Esophagus muscularis mucosa (tissue), 4 donors: ENCODE measurements at regions of chr7 and their contacts with region 1.

Region 1: DNA sequence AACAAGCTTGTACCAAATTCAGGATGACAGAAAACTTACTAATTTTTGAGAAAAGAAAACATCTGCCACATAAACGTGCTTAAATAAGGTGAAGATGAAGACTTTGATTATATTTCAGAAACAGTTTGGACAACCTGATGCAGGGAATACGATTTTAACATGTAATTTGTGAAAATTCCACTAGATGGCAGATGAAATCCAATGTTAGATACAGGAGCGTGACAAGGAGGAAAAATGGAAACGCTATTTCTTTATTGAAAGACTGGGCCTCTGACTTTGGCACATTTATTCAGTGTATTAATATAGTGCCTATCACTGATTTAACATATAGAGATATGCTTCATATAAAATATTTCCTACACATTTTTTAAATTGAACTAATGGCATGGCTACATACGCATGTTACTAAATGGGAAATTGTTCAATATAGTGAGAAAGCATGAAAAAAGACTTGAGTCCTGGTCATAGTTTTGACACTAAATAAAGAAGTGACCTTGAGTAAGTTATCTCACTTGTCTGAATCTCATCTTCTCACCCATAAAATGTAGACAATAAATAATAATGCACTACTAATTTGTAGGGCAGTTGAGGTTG is 60.7 kb downstream of the CD36 start:
- DNase-seq: no peak
- H3K4me3 ChIP-seq: no peak overlapping the region
- H3K27ac ChIP-seq: peak overlapping the region in 3 of 4 donors; percentile 26 to 52 (median 51)
- H3K4me1 ChIP-seq: peaks cover 0 to 18% (median 16%) of the 10 kb centered on the region in 4 donors
- H3K27me3 ChIP-seq: no peaks in the 10 kb centered on the region
- CTCF ChIP-seq: peak; percentile 66 to 76 (median 68)
- EP300 ChIP-seq: no peak
- POLR2A ChIP-seq: no peak

Region 2: GRCh38 chr7:81256991-81257390 is 557.8 kb after region 1 on chr7:
- intact Hi-C with region 1: loop called (anchors 10 kb)
- DNase-seq: no peak
- H3K4me3 ChIP-seq: no peak overlapping the region
- H3K27ac ChIP-seq: no peak overlapping the region
- H3K4me1 ChIP-seq: no peaks in the 10 kb centered on the region
- H3K27me3 ChIP-seq: no peaks in the 10 kb centered on the region
- CTCF ChIP-seq: peak; percentile 26 to 46 (median 27)
- EP300 ChIP-seq: no peak
- POLR2A ChIP-seq: no peak

Region 3: GRCh38 chr7:81447351-81447952 is 748.3 kb after region 1 on chr7:
- intact Hi-C with region 1: loop called (anchors 5 kb)
- DNase-seq: no peak
- H3K4me3 ChIP-seq: no peak overlapping the region
- H3K27ac ChIP-seq: no peak overlapping the region
- H3K4me1 ChIP-seq: no peaks in the 10 kb centered on the region
- H3K27me3 ChIP-seq: no peaks in the 10 kb centered on the region
- CTCF ChIP-seq: peak; percentile 30 to 37 (median 36)
- EP300 ChIP-seq: no peak
- POLR2A ChIP-seq: no peak

Region 4: DNA sequence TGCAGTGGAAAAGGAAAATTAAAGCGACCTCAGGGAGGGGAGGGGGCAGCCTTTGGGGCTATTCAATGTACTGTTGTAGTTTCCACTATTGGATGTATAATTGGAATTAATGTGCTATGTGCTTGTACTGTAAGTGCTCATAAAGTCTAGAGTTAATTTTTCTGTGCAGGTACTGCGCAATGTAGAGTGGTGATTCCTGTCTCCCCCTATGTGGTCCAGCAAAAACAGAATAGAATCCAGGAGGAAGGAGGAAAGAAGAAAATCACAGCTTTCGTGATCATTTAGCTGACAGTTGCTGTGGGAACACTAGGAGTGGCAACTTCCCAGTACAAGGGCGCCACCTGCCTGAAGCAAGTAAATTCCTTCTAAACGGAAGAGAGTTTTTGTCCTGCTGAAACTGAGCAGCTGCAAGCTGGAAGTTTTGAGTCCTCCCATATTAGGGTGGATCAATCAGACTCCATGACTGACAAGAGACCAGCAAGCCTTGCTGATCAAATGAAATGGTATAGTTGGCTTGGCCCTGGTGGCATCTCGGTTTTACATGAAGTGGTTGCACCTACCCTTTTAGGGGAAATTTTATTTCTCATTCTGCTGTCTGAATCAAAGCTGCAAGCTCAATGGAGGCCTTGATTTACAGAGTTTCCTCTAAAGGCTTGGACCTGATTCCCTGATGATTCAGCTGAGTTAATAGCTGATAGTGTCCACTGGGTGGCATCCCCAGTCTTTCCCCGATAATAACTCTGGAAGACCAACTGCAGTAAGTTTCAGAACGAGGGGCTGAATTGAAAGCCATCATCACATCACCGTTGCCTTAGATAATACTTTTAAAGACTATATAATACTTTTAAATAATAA is 771.0 kb after region 1 on chr7:
- intact Hi-C with region 1: loop called (anchors 2 kb)
- DNase-seq: no peak
- H3K4me3 ChIP-seq: no peak overlapping the region
- H3K27ac ChIP-seq: no peak overlapping the region
- H3K4me1 ChIP-seq: peaks cover 0 to 9% (median 3%) of the 10 kb centered on the region in 4 donors
- H3K27me3 ChIP-seq: no peaks in the 10 kb centered on the region
- CTCF ChIP-seq: peak; percentile 61 to 69 (median 63)
- EP300 ChIP-seq: no peak
- POLR2A ChIP-seq: no peak